ENCODE measurements at regions of chr15 and their contacts with region 1.

Region 1: DNA sequence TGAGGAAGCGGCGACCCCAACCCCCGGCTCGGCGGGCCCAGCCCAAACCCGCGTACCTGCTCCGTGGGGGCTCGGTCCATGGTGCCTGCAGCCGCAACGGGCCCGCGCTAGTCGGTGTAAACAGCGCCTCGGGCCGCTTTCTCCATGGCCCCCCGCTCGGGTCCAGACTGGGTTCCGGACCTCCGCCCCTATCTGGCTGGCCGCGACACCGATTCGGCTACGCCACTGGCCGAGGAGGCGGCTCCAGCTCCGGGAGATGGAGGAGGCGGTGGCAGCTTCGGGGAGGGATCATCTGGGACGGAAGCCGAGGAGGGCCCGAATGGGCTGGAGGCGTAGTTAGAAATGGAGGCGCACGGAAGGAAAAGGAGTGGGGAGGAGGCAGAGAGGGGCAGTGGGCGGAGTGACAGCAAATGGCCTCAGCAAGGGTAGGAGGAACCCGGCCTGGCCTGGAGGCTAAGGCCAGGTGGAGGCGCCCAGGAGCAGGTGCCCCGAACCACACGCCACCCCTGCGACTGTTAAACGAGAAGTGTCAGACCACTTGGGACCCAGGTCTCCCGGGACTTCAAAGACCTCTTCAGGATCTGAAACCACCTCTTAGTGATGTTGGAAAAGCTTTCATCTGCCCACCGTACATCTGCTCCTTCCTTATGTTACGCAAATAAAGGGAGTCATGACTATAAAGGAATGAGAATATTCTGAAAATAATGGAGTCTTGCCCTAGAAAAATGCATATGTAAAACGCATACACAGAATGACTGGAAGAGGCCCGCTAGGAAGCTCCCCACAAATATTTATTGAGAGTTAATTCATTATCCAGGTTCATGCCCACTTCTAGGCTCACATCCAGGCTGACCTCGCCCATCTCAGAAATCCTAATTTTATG is at the start of gene SECISBP2L:
- DNase-seq: peak; percentile 93 to 96
- ATAC-seq: peak; percentile 97 to 99 (median 99)
- H3K4me3 ChIP-seq: peak within 1 kb of the TSS; percentile 70 to 100 (median 92)
- H3K27ac ChIP-seq: peak within 1 kb of the TSS; percentile 51 to 97 (median 90)
- H3K4me1 ChIP-seq: peaks cover 0 to 45% (median 32%) of the 10 kb centered on the region in 9 donors
- H3K27me3 ChIP-seq: no peaks in the 10 kb centered on the region
- CTCF ChIP-seq: peak in 7 of 9 donors; percentile 19 to 57 (median 37)
- total RNA-seq, gene SECISBP2L: 29.8 to 49.8 (median 44.0) TPM

Region 2: DNA sequence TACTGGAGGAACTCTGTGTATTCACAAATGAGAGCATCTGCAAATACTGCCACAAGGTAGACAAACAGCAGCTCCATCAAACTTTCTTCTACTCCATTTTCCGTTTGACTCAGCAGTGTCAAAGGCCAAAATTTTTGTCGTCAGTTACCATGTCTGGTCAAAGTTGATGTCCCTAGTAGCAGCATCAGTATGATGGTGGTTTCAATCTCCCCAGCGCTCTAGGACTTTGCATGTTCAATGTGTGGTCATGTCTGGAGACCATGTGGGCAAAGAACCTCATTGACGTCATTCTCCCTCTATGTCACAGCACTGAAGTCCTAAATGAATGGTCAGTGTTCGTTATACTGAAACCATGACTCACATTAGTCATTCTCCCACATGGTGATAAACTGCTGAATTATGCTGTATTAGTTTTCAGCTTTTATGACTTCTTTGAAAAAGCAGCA is 106.0 kb before region 1 on chr15:
- intact Hi-C with region 1: no loop called
- DNase-seq: no peak
- ATAC-seq: no peak
- H3K4me3 ChIP-seq: no peak overlapping the region
- H3K27ac ChIP-seq: no peak overlapping the region
- H3K4me1 ChIP-seq: peaks cover 0 to 18% (median under 1%) of the 10 kb centered on the region in 9 donors
- H3K27me3 ChIP-seq: no peaks in the 10 kb centered on the region
- CTCF ChIP-seq: no peak

Region 3: DNA sequence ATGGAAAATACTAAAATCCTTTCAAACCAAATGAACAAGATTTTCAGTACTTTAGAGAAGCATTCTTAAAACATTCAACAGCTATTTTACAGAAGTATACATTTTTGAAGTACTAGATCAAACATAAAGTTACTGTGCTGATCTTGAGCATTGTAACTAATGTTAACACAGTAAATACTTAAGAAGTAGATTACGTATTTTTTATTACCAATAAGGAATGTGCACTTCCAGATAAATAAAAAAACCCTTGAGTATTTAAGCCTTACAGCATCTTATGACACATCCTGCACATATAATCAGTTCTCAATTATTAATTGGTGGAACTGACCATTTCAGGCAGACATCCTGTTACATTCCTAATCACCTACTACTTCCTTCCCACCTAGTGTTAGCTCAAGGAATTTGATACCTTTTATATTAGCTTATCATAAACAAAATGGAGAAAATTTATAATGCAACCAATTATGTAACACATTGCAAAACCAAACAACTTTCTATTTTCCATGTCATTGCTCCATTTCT is 76.1 kb after region 1 on chr15:
- intact Hi-C with region 1: loop called in 1 of 10 experiments (anchors 10 kb)
- DNase-seq: no peak
- ATAC-seq: no peak
- H3K4me3 ChIP-seq: no peak overlapping the region
- H3K27ac ChIP-seq: no peak overlapping the region
- H3K4me1 ChIP-seq: peaks cover 0 to 10% (median 0%) of the 10 kb centered on the region in 9 donors
- H3K27me3 ChIP-seq: no peaks in the 10 kb centered on the region
- CTCF ChIP-seq: no peak

Region 4: GRCh38 chr15:49155110-49155833 is 108.8 kb after region 1 on chr15 and contains the start of gene COPS2:
- intact Hi-C with region 1: loop called in 2 of 10 experiments (anchors 5 to 10 kb)
- DNase-seq: peak; percentile 86 to 96
- ATAC-seq: peak; percentile 98 to 99 (median 99)
- H3K4me3 ChIP-seq: peak within 1 kb of the TSS; percentile 84 to 98 (median 92)
- H3K27ac ChIP-seq: peak within 1 kb of the TSS; percentile 45 to 94 (median 88)
- H3K4me1 ChIP-seq: peaks cover 2 to 58% (median 41%) of the 10 kb centered on the region in 9 donors
- H3K27me3 ChIP-seq: no peaks in the 10 kb centered on the region
- CTCF ChIP-seq: peak in 1 of 9 donors; percentile 9
- total RNA-seq, gene COPS2: 71.3 to 91.8 (median 86.8) TPM